Naive thymus-derived CD4-positive, alpha-beta T cell (primary cell): ENCODE measurements at regions of chr17 and their contacts with region 1.

Region 1: GRCh38 chr17:57671667-57672632 is 73.1 kb downstream of the CCDC182 start:
- DNase-seq: peak; percentile 47 to 73 (median 61)
- ATAC-seq: peak; percentile 92
- H3K4me3 ChIP-seq: peak overlapping the region; percentile 31
- H3K4me3 Mint-ChIP-seq: peak overlapping the region in 5 of 10 donors; percentile 10 to 61 (median 29)
- H3K27ac ChIP-seq: no peak overlapping the region
- H3K27ac Mint-ChIP-seq: peak overlapping the region; percentile 10 to 84 (median 74)
- H3K4me1 ChIP-seq: peaks cover 6 to 29% of the 10 kb centered on the region in 2 donors
- H3K4me1 Mint-ChIP-seq: peaks cover 0 to 26% (median 14%) of the 10 kb centered on the region in 7 donors
- H3K27me3 ChIP-seq: no peaks in the 10 kb centered on the region
- H3K27me3 Mint-ChIP-seq: no peaks in the 10 kb centered on the region

Region 2: DNA sequence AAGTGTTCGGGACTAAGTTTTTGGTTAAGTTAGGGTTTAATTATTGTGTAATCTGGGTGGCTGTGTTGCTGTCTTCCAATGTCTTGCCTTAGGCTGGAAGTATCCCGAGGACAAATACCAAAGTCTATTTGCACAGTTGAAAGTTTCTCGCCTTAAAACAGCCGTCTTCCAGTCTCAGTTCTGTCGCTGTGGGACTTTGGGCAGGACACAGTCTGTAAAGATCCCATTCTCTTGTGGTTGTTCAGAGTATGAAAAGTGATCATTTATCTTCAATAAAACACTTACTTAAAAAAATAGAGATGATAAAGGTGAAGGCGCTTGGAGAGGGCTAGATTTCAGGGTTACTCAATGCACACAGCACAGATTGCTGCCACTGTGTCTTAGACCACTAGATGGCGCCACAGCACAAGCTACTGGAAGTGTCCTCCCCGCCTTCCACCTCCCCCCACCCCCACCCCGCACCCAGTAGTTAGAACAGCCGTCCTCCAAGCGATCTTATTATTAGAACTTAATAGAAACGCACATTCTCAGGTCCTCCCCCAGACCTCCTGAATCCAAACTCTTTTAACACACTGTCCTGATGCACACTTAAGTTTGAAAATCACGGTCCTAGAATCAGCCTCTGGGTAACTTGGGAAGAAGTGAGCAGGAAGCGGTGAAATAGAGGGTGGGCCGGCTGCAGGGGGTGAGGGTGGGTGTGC is 541.0 kb before region 1 on chr17:
- CTCF ChIA-PET with region 1: interaction called, 3 read pairs
- POLR2A ChIA-PET with region 1: no interaction called
- intact Hi-C with region 1: loop called (anchors 1 kb)
- DNase-seq: peak; percentile 53 to 82 (median 75)
- ATAC-seq: peak; percentile 96
- H3K4me3 ChIP-seq: no peak overlapping the region
- H3K4me3 Mint-ChIP-seq: peak overlapping the region in 5 of 10 donors; percentile 14 to 53 (median 46)
- H3K27ac ChIP-seq: no peak overlapping the region
- H3K27ac Mint-ChIP-seq: no peak overlapping the region
- H3K4me1 ChIP-seq: peaks cover 0 to 6% of the 10 kb centered on the region in 2 donors
- H3K4me1 Mint-ChIP-seq: peaks cover 4 to 11% (median 8%) of the 10 kb centered on the region in 7 donors
- H3K27me3 ChIP-seq: no peaks in the 10 kb centered on the region
- H3K27me3 Mint-ChIP-seq: no peaks in the 10 kb centered on the region

Region 3: GRCh38 chr17:57284984-57285646 is 386.8 kb before region 1 on chr17:
- CTCF ChIA-PET with region 1: no interaction called
- POLR2A ChIA-PET with region 1: no interaction called
- intact Hi-C with region 1: loop called in 1 of 2 experiments (anchors 2 kb)
- DNase-seq: peak in 8 of 9 donors; percentile 4 to 75 (median 16)
- ATAC-seq: peak; percentile 75
- H3K4me3 ChIP-seq: peak overlapping the region; percentile 20
- H3K4me3 Mint-ChIP-seq: peak overlapping the region; percentile 70 to 85 (median 75)
- H3K27ac ChIP-seq: peak overlapping the region; percentile 18
- H3K27ac Mint-ChIP-seq: peak overlapping the region; percentile 55 to 93 (median 79)
- H3K4me1 ChIP-seq: peaks cover 24 to 34% of the 10 kb centered on the region in 2 donors
- H3K4me1 Mint-ChIP-seq: peaks cover 60 to 90% (median 88%) of the 10 kb centered on the region in 7 donors
- H3K27me3 ChIP-seq: no peaks in the 10 kb centered on the region
- H3K27me3 Mint-ChIP-seq: no peaks in the 10 kb centered on the region

Region 4: DNA sequence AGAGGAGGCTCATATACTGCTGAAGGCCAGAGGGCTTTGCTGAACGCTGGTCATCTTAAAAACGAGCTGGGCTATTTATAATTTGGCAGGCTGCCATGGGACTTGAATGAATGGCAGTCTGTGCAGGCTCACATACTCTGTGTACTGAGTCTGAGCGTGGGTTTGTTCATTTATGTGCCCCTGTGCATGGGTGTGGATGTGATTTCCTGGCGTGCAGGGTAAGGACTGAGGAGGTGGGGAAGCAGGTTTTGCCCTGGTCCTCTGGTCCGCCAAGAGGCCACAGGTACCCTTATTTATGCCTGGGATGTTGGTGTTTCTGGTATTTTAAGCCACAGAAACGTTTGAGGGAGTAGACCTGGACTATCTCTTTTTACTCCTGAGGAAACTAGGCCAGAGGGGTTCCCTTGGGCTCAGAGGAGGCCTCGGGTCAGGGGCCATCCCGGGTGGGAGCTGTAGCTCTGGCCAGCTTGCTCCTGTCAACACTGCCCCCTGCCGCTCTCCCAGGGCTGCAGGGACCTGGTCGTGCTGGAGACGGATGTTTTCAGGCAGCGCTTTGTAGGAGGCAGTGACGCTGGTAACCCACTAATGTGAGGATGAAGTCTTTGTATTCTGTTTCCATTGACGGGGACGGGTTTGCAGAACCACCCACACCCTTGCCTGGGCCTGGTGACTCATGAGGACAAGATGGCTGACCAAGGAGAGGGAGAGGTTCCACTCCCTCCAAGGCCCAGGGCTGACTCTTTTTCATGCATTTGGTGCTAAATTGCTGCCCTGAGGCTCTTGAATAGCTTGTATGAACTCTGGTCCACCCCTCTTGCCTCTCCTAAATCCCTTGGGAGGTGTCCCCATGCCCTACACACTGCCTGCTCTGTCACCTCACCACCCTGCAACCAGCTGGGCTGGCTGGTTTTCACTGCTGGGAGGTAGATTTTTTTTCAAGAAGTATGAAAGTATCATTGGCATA is 231.1 kb before region 1 on chr17:
- CTCF ChIA-PET with region 1: no interaction called
- POLR2A ChIA-PET with region 1: no interaction called
- intact Hi-C with region 1: loop called in 1 of 2 experiments (anchors 5 kb)
- DNase-seq: peak; percentile 26 to 82 (median 70)
- ATAC-seq: peak; percentile 88
- H3K4me3 ChIP-seq: no peak overlapping the region
- H3K4me3 Mint-ChIP-seq: peak overlapping the region; percentile 36 to 78 (median 52)
- H3K27ac ChIP-seq: peak overlapping the region; percentile 36
- H3K27ac Mint-ChIP-seq: peak overlapping the region; percentile 81 to 96 (median 92)
- H3K4me1 ChIP-seq: peaks cover 31 to 39% of the 10 kb centered on the region in 2 donors
- H3K4me1 Mint-ChIP-seq: peaks cover 58 to 87% (median 81%) of the 10 kb centered on the region in 7 donors
- H3K27me3 ChIP-seq: no peaks in the 10 kb centered on the region
- H3K27me3 Mint-ChIP-seq: no peaks in the 10 kb centered on the region

Region 5: GRCh38 chr17:57552114-57552624 is 119.8 kb before region 1 on chr17:
- CTCF ChIA-PET with region 1: interaction called, 5 read pairs
- POLR2A ChIA-PET with region 1: no interaction called
- intact Hi-C with region 1: loop called in 1 of 2 experiments (anchors 5 kb)
- DNase-seq: peak in 4 of 9 donors; percentile 11 to 40 (median 20)
- ATAC-seq: peak; percentile 41
- H3K4me3 ChIP-seq: no peak overlapping the region
- H3K4me3 Mint-ChIP-seq: peak overlapping the region in 6 of 10 donors; percentile 24 to 62 (median 38)
- H3K27ac ChIP-seq: no peak overlapping the region
- H3K27ac Mint-ChIP-seq: peak overlapping the region in 7 of 9 donors; percentile 13 to 81 (median 59)
- H3K4me1 ChIP-seq: peaks cover 4 to 19% of the 10 kb centered on the region in 2 donors
- H3K4me1 Mint-ChIP-seq: peaks cover 20 to 74% (median 61%) of the 10 kb centered on the region in 7 donors
- H3K27me3 ChIP-seq: no peaks in the 10 kb centered on the region
- H3K27me3 Mint-ChIP-seq: no peaks in the 10 kb centered on the region

Region 6: DNA sequence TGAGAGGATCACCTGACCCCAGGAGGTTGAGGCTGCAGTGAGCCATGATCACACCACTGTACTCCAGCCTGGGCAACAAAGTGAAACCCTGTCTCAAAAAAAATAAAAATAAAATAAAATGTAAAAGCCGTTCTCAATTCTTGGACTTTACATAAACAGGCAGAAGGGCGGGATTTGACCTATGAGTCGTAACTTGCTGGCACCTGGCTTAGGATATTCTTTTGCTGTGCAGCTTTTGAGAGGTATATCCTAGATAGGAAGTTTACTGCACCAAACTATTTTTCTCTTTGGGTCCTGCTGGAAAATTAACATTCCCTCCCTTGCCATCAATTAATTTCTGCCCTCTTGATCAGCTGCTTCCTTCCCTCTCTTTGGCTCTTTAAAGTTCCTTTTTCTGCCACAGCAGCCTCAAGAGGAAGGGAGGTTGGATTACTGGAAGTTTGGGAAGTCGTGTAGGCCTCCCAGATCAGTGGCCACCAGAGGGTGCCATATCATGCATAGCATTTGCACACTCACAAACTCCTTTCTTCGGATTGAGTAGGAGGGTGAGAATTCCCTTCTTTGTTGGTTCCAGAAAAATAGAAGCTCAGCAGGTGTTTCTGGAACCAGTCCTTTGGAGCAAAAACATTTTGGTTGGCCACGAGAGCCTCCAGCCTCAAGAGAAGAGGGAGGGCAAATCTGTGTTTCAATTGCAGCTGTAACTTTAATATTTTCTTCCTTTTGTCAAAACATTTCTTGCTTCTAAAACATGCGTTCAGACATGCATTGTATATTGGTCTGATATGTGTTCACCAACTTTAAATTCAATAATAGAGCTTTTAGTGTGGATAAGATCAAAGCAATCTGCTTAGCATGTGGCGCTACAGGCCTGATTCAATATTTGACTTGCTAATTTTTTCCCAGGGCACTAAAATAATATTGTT is 74.2 kb before region 1 on chr17:
- CTCF ChIA-PET with region 1: interaction called, 63 read pairs
- POLR2A ChIA-PET with region 1: interaction called, 5 read pairs
- intact Hi-C with region 1: loop called (anchors 1 kb)
- DNase-seq: peak in 2 of 9 donors; percentile 14 to 19
- ATAC-seq: peak; percentile 55
- H3K4me3 ChIP-seq: no peak overlapping the region
- H3K4me3 Mint-ChIP-seq: peak overlapping the region in 5 of 10 donors; percentile 15 to 69 (median 25)
- H3K27ac ChIP-seq: peak overlapping the region; percentile 34
- H3K27ac Mint-ChIP-seq: peak overlapping the region; percentile 66 to 97 (median 94)
- H3K4me1 ChIP-seq: peaks cover 48 to 53% of the 10 kb centered on the region in 2 donors
- H3K4me1 Mint-ChIP-seq: peaks cover 44 to 65% (median 55%) of the 10 kb centered on the region in 7 donors
- H3K27me3 ChIP-seq: no peaks in the 10 kb centered on the region
- H3K27me3 Mint-ChIP-seq: no peaks in the 10 kb centered on the region

Region 7: DNA sequence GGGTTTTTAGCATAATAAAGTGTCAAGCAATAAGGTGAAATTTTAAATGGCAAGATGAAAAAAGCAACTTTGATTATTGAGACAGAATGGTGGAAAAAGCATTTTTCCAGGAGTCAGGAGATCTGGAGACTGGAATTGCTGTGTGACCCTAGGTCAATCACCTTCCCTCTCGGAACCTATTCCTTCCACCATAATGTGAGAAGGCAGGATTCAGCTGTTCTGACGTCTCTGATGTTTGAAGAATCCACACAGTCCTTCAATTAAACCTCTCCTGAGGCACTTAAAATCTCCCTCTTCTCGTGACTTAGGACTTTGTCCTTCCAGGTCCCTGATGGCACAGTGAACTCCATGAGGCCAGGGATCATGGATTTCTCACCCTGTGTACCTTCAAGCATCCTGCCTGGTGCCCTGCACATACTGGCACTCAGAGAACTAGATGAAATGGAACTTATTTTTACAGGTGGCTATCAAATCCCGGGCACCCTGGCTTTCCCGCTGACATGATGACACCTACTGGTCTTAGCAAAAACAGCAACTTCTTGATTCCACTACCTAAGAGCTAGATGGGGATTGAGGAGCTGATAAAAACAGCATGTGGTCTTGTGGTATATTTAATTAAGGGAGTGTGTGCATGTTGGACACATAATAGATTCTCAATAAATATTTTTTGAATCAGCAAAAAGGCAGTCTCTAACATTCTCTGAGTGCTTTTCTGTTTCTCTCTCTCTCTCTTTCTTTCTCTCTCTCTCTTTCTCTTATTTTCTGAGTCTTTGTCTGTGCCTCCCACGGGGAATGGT is 75.5 kb after region 1 on chr17:
- CTCF ChIA-PET with region 1: interaction called, 3 read pairs
- POLR2A ChIA-PET with region 1: no interaction called
- intact Hi-C with region 1: loop called in 1 of 2 experiments (anchors 1 kb)
- DNase-seq: peak in 8 of 9 donors; percentile 18 to 65 (median 50)
- ATAC-seq: peak; percentile 66
- H3K4me3 ChIP-seq: no peak overlapping the region
- H3K4me3 Mint-ChIP-seq: no peak overlapping the region
- H3K27ac ChIP-seq: no peak overlapping the region
- H3K27ac Mint-ChIP-seq: peak overlapping the region in 1 of 9 donors; percentile 2
- H3K4me1 ChIP-seq: no peaks in the 10 kb centered on the region
- H3K4me1 Mint-ChIP-seq: peaks cover 0 to 6% (median 0%) of the 10 kb centered on the region in 7 donors
- H3K27me3 ChIP-seq: no peaks in the 10 kb centered on the region
- H3K27me3 Mint-ChIP-seq: peaks cover 0 to 15% (median 4%) of the 10 kb centered on the region in 5 donors

Region 8: DNA sequence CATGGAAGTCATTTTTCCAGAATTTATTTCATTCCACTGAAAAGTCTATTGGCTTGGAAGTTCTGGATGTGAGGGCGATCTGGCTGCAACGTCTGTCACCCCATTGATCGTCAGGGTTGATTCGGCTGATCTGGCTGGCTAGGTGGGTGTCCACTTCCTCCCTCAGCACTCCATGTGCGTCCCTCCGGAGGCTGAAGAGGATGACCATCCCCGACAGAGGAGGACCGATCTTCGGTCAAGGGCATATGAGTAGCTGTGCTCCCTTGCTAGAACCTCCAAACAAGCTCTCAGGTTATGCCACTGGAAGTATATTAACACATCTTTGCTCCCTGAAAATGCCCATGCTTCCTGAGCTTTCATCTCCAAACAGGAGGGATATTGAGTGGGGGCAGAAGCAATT is 117.4 kb after region 1 on chr17:
- CTCF ChIA-PET with region 1: no interaction called
- POLR2A ChIA-PET with region 1: no interaction called
- intact Hi-C with region 1: no loop called
- DNase-seq: no peak
- ATAC-seq: no peak
- H3K4me3 ChIP-seq: no peak overlapping the region
- H3K4me3 Mint-ChIP-seq: no peak overlapping the region
- H3K27ac ChIP-seq: no peak overlapping the region
- H3K27ac Mint-ChIP-seq: no peak overlapping the region
- H3K4me1 ChIP-seq: no peaks in the 10 kb centered on the region
- H3K4me1 Mint-ChIP-seq: peaks cover 0 to 9% (median 4%) of the 10 kb centered on the region in 7 donors
- H3K27me3 ChIP-seq: no peaks in the 10 kb centered on the region
- H3K27me3 Mint-ChIP-seq: peaks cover 20 to 58% (median 43%) of the 10 kb centered on the region in 5 donors